Activated CD8-positive, alpha-beta T cell treated with anti-CD3 and anti-CD28 coated beads for 36 hours (primary cell): ENCODE measurements at regions of chr16 and their contacts with region 1.

Region 1: DNA sequence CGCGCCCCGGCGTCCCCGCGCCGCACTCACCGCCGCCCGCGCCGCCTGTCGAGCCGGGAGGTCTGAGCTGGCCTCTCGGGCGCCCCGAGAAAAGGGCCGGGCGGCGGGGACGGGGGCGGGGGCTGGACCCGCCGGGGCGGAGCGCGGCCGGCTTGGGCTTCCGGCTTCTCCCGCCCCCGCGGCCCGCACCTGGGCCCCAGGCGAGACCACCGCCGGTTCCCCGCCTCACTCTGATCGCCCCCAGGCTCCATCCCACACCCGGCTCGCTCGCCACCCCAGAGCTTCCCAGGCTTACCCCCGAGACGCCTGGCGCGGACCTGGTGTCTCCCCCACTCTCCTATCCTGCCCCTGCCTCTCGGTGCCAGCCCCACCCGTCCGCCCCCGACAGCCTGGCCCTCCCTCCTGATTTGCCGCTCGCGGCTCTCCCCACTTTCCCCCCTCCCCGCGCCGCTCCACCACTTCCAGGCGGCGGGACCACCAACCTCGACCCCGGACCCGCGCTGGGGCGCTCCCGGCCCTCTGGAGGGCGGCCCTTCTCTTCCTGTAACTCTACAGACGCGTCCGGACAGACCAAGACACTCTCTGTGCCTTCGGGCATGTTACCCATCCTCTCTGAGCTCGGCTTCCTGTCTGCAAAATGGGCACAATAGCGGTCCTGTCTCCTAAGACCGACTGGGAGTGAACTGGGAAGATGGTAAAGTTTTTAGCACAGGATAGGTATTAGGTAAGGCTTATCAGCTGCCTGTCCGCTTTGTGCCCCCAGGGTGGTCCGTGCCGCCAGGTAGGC is at the start of gene LITAF:
- DNase-seq: peak; percentile 68
- ATAC-seq: peak; percentile 65
- H3K4me3 Mint-ChIP-seq: peak within 1 kb of the TSS; percentile 86
- H3K27ac Mint-ChIP-seq: peak within 1 kb of the TSS; percentile 96
- H3K4me1 Mint-ChIP-seq: peaks cover 29% of the 10 kb centered on the region
- H3K27me3 Mint-ChIP-seq: no peaks in the 10 kb centered on the region
- CTCF ChIP-seq: no peak
- total RNA-seq, gene LITAF: 108 to 110 TPM

Region 2: DNA sequence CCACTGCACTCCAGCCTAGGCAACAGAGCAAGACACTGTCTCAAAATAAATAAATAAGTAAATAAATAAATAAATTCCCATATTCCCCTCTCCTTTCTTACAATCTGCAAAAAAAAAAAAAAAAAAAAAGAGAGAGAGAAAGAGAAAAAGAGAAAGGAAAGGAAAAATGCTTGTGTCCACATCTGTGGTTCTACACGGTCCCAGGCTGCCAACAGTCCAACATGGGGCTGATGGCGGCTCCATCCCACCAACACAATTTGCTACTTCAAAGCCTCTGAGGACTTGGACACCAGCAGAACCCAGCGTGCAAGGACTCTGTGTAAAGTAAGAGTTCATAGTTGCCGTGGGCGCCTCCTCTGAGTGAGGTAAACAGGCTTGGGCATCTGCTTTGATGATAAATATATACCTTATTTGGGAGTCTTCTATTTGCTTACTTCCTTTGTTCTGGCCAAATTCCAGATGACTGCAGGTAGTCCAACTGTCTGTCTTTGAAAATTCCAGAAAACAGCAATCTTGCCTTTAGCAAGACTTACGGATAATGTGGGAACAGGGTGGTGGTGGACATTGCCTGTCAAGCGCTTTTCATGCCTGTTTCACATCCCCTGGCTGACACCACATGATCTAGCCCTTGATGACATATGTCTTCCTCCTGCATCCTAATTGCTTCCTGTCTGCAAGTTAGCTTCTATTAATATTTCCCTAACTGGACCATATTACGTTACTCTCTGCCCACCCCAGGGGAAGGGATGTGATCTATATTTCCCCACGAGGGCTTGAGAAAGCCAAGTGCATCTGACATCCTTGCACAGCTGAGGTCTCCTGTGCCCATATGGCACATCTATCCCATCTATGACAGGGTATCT is 10.4 kb before region 1 on chr16:
- CTCF ChIA-PET with region 1: interaction called, 4 read pairs
- POLR2A ChIA-PET with region 1: interaction called, 20 read pairs
- intact Hi-C with region 1: no loop called
- DNase-seq: no peak
- ATAC-seq: no peak
- H3K4me3 Mint-ChIP-seq: no peak overlapping the region
- H3K27ac Mint-ChIP-seq: peak overlapping the region; percentile 30
- H3K4me1 Mint-ChIP-seq: peaks cover 73% of the 10 kb centered on the region
- H3K27me3 Mint-ChIP-seq: no peaks in the 10 kb centered on the region
- CTCF ChIP-seq: no peak

Region 3: GRCh38 chr16:11597239-11598101 is 10.4 kb after region 1 on chr16:
- CTCF ChIA-PET with region 1: interaction called, 12 read pairs
- POLR2A ChIA-PET with region 1: interaction called, 12 read pairs
- intact Hi-C with region 1: no loop called
- DNase-seq: peak; percentile 27
- ATAC-seq: peak; percentile 81
- H3K4me3 Mint-ChIP-seq: no peak overlapping the region
- H3K27ac Mint-ChIP-seq: peak overlapping the region; percentile 51
- H3K4me1 Mint-ChIP-seq: peaks cover 22% of the 10 kb centered on the region
- H3K27me3 Mint-ChIP-seq: no peaks in the 10 kb centered on the region
- CTCF ChIP-seq: no peak

Region 4: GRCh38 chr16:11639925-11640899 is 53.2 kb after region 1 on chr16:
- CTCF ChIA-PET with region 1: interaction called, 4 read pairs
- POLR2A ChIA-PET with region 1: no interaction called
- intact Hi-C with region 1: loop called (anchors 10 kb)
- DNase-seq: no peak
- ATAC-seq: peak; percentile 21
- H3K4me3 Mint-ChIP-seq: no peak overlapping the region
- H3K27ac Mint-ChIP-seq: no peak overlapping the region
- H3K4me1 Mint-ChIP-seq: peaks cover 10% of the 10 kb centered on the region
- H3K27me3 Mint-ChIP-seq: no peaks in the 10 kb centered on the region
- CTCF ChIP-seq: no peak